ENCODE measurements at regions of chr11 and their contacts with region 1.

Region 1: GRCh38 chr11:72238040-72238450 is 5.9 kb downstream of the PHOX2A start:
- DNase-seq: peak; percentile 64 to 84 (median 77)
- ATAC-seq: peak; percentile 94
- H3K4me3 ChIP-seq: no peak overlapping the region
- H3K27ac ChIP-seq: no peak overlapping the region
- H3K4me1 ChIP-seq: peaks cover 0 to 28% of the 10 kb centered on the region in 2 experiments; a peak in 2 of 5 replicates
- H3K27me3 ChIP-seq: no peaks in the 10 kb centered on the region
- CTCF ChIP-seq: peak; percentile 82 to 85 (median 83)
- EP300 ChIP-seq: no peak
- POLR2A ChIP-seq: no peak
- RAD21 ChIP-seq: peak; percentile 34 to 58

Region 2: GRCh38 chr11:72222907-72223614 is 15.0 kb before region 1 on chr11:
- CTCF ChIA-PET with region 1: no interaction called
- POLR2A ChIA-PET with region 1: interaction called, 13 read pairs
- in situ Hi-C with region 1: no loop called
- intact Hi-C with region 1: no loop called
- DNase-seq: peak; percentile 89 to 97 (median 90)
- ATAC-seq: peak; percentile 86
- H3K4me3 ChIP-seq: peak overlapping the region; percentile 84
- H3K27ac ChIP-seq: peak overlapping the region; percentile 88
- H3K4me1 ChIP-seq: peaks cover 24 to 46% of the 10 kb centered on the region in 2 experiments
- H3K27me3 ChIP-seq: no peaks in the 10 kb centered on the region
- CTCF ChIP-seq: peak in 2 of 3 experiments; percentile 30 to 38; a peak in 2 of 6 replicates
- EP300 ChIP-seq: no peak; the same call in 1 of the 2 replicates
- POLR2A ChIP-seq: peak; percentile 74
- RAD21 ChIP-seq: no peak

Measured in K562 (cell line).